AG04449 (cell line): ENCODE measurements at regions of chr12 and their contacts with region 1.

Region 1: DNA sequence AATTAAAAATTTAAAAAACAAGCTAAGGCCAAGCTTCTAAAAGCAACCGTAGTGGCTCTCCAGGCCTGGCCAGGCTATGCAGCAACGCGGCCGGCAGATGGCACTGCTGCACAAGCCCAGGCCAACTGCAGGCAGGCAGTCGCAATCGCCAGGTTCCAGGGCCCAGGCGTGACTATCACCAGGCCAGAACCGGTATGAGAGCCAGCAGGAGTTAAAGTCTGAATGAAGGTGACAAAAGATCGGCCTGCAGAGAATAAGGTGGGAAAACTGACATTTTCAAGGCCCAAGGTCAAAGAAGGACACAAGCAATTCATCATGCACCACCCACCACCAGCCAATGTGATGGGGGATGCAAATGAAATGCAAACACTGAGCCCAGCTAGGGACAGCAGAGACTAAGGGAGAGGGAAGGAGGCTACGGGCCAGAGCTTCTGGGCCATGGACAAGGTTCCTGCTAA is 43.6 kb upstream of the ANO2 start:
- DNase-seq: peak; percentile 5
- H3K4me3 ChIP-seq: no peak overlapping the region
- CTCF ChIP-seq: peak; percentile 98

Region 2: DNA sequence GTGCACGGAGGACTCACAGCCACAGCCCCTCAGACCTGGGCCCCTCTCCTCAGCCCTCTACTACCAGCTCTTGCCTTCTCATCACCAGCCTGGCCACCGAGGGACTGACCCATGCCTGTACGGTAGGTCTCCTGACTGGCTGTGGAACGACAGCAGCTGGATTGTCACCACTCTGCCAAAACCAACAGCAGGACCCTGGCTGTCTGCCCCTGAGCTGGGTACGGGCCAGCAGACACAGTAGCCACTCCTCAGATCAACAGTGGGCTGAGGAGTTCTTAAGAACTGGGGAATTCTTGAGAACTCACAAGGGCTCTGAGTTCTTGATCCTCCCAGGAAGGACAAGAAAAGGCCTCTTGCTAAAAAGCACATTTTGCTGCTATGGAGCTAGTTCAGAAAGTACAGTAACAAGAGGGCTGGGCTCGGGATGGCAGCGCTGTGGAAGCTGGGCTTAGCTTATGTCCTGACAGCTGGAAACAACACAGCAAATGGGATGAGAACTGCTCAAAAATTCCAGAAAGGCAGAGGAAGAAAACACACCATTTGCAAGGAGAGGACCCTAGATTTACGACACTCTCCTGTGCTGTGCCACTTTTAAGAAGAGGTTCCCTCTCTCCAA is 220.0 kb before region 1 on chr12:
- CTCF ChIA-PET with region 1: no interaction called
- POLR2A ChIA-PET with region 1: no interaction called
- DNase-seq: no peak
- H3K4me3 ChIP-seq: no peak overlapping the region
- CTCF ChIP-seq: no peak

Region 3: DNA sequence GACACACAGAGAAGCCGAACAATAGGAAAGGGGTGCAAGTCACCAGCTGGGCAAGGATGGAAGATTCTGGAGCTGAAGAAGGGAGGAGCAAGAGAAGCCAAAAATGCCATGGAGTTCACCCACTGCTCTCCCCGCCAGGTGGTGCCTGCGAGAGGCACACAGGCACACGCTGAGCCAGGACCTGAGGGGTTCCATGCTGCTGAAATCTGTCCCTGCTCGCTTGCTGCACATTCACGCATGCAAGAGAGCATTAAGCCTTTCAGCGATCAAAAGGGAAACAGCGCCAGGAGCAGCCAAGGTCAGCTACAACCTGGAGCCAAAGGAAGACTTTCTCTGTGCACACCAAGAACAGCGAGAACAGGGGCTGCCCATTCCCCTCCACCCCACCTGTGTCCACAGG is 147.7 kb before region 1 on chr12:
- CTCF ChIA-PET with region 1: no interaction called
- POLR2A ChIA-PET with region 1: no interaction called
- DNase-seq: no peak
- H3K4me3 ChIP-seq: no peak overlapping the region
- CTCF ChIP-seq: no peak

Region 4: DNA sequence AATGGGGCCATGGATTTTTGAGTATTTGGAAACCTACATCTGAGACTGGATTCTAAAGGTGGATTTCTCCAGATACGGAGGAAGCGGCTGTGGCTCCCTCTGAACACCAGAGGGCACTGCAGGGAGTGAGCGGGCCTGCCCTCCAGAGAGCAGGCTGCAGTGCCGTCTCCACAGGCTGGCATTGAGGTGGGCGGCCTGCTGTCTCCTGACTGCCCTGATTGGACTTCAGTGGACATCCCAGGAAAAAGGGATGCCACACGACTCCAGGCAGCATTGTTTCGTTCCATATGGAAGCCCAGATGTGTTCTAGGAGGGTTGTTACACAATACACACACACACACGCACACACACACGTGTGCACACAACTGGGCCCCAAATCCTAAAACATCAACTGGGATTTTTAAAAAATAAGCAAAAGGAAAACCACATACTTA is 22.7 kb before region 1 on chr12:
- CTCF ChIA-PET with region 1: interaction called, 13 read pairs
- POLR2A ChIA-PET with region 1: no interaction called
- DNase-seq: no peak
- H3K4me3 ChIP-seq: no peak overlapping the region
- CTCF ChIP-seq: peak; percentile 94

Region 5: DNA sequence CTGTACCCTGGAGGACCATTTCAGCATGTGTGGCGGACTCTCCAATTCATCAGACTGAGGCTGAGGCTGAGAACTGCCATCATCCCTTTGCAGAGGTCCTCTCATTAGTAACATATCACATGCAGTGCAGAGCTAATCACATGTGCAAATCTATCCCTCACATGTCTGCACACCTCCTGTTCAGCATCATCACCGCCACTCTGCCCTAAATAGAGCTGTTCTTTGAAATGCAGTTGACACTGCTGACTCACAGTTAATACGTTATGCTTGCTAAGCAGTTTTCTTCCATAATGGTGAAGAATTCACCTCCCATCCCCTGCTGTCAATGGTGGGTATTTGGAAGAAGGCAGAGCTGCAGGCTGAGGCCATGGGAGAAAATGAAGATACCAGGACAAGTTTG is 41.4 kb after region 1 on chr12:
- CTCF ChIA-PET with region 1: interaction called, 616 read pairs
- POLR2A ChIA-PET with region 1: no interaction called
- DNase-seq: no peak
- H3K4me3 ChIP-seq: no peak overlapping the region
- CTCF ChIP-seq: no peak

Region 6: GRCh38 chr12:6056406-6057240 is 67.9 kb after region 1 on chr12:
- CTCF ChIA-PET with region 1: interaction called, 19 read pairs
- POLR2A ChIA-PET with region 1: no interaction called
- DNase-seq: no peak
- H3K4me3 ChIP-seq: no peak overlapping the region
- CTCF ChIP-seq: peak; percentile 35

Region 7: GRCh38 chr12:6278439-6279255 is 290.0 kb after region 1 on chr12:
- CTCF ChIA-PET with region 1: interaction called, 155 read pairs
- POLR2A ChIA-PET with region 1: no interaction called
- DNase-seq: no peak
- H3K4me3 ChIP-seq: peak overlapping the region; percentile 60
- CTCF ChIP-seq: peak; percentile 64